ENCODE measurements at regions of chr9 and their contacts with region 1.

Region 1: GRCh38 chr9:34899535-34900158 is 58.4 kb upstream of the PHF24 start:
- DNase-seq: peak; percentile 80 to 94 (median 84)
- H3K4me3 ChIP-seq: peak overlapping the region in 6 of 59 donors; percentile 10 to 39 (median 16)
- H3K27ac ChIP-seq: peak overlapping the region in 33 of 59 donors; percentile 12 to 83 (median 56)
- H3K27me3 ChIP-seq: peaks cover 0 to 4% (median 0%) of the 10 kb centered on the region in 45 donors
- CTCF ChIP-seq: peak; percentile 62 to 95 (median 88)

Region 2: DNA sequence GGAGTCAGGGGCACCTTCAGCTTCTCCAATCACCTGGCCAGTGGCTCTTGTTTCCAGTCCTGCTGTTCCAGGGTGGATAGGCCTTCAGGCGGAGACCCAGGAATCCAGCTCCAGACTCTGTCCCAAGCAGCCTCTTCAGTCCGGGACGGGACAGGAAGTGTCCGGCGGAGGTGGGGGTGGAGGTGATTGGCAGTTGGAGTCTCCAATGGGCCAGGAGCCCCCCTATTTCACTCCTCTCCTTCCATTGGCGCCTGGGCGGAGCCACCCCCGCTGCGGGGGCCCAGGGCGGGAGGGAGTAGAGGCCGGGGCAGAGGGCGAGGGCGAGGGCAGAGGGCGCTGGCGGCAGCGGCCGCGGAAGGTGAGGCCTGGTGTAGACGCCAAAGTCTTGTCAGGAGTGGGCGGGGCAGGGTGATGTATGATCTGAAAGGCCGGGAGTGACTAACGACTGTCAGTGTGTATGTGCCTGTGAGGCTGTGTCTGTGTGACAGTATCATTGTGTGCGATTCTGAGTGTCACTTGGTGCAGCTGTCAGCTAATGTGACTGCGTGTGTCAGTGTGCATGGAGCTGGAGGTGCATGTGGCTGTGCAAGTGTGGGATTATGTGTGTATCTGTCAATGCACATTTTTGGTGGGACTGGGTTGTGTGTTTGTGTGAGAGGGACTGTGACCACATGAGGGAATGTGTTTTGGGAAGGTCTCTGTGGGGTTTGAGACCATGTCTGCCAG is 247.6 kb before region 1 on chr9 and contains the start of gene IL11RA:
- intact Hi-C with region 1: no loop called
- DNase-seq: peak; percentile 28 to 92 (median 84)
- H3K4me3 ChIP-seq: peak within 1 kb of the TSS; percentile 24 to 68 (median 50)
- H3K27ac ChIP-seq: peak within 1 kb of the TSS in 58 of 59 donors; percentile 53 to 92 (median 80)
- H3K27me3 ChIP-seq: no peaks in the 10 kb centered on the region
- CTCF ChIP-seq: peak in 32 of 56 donors; percentile 1 to 55 (median 31)
- total RNA-seq, gene IL11RA: 14.7 to 58.5 (median 30.4) TPM

Region 3: DNA sequence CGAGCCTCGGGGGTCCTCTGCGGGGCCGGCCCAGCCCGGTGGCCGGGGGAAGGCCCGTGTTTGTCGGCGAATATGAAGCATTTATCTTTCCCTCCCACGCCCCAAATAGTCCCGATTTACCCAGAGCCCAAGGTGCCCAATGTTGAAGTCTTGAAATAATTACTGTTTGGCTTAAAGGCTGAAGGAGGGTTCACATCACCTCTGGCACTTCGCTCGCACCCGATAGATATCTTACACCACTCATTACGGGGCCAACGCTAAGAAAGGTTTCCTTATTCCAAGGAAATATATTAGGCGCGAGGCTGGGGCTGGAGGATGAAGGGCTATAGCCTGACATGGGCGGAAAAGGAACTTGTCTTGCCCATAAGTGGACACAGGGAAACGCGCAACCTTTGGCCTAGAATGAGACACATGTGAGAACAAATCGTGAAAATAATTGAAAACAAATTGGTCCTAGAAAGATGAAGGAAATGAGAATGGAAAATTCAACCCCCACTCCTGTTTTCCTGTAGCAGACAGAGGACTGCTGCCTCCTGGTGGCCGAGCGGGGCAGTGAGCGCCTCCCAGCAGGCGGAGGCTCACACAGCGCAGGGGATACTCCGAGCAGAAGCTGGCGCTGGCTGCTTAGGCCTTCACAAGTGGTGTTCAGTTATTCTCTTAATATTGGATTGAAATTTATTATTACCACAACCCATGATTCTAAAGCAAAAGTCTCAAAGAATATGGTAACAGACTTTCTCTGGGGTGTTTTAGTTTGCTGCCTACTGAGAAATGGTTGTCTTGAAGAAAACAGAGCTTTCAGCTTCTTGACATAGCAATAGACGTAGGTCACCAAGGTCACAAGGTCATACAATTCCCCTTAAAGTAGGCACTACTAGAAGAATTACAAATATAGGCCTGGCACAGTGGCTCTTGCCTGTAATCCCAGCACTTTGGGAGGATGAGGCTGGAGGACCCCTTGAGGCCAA is 197.6 kb before region 1 on chr9:
- intact Hi-C with region 1: loop called in 1 of 2 experiments (anchors 5 kb)
- DNase-seq: peak; percentile 80 to 87 (median 84)
- H3K4me3 ChIP-seq: peak overlapping the region; percentile 53 to 92 (median 75)
- H3K27ac ChIP-seq: peak overlapping the region in 57 of 59 donors; percentile 49 to 91 (median 81)
- H3K27me3 ChIP-seq: no peaks in the 10 kb centered on the region
- CTCF ChIP-seq: peak; percentile 90 to 100 (median 98)

Region 4: DNA sequence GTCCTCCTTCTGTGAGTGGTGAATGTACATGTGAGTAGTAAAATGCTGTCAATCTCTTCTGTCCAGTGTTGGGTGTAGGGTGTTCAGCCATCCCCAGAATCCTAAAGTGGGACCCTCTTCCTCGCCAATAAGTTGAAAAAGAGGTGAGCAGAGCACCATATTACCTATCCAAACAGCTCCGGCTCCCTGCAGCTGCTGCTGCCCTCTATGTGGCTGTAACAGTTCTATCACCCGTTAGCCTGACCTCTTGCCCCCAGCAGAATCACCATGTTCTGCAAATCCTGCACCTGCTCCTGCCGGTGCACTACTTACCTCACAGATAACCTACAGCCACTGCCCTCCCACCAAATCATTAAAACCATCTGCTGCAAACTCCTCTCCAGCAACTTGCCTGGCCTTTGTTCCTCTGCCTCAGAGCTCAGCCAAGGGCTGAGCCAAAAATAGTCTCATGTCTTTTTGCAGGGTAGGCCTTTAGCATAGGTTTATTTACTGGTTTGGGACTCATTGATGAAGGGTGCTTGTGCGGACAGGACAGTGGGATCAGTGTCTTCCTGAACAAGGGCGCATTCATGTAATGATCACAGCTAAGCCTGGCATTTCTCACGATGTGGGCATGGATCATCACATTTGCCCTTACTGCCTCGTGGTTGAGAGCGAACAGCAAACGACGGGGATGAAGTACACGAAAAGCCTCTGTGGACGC is 140.1 kb before region 1 on chr9:
- intact Hi-C with region 1: loop called in 1 of 2 experiments (anchors 10 kb)
- DNase-seq: peak in 6 of 10 donors; percentile 30 to 65 (median 44)
- H3K4me3 ChIP-seq: peak overlapping the region in 2 of 59 donors; percentile 10 to 32
- H3K27ac ChIP-seq: peak overlapping the region in 24 of 59 donors; percentile 6 to 77 (median 47)
- H3K27me3 ChIP-seq: peaks cover 0 to 3% (median 0%) of the 10 kb centered on the region in 45 donors
- CTCF ChIP-seq: peak in 4 of 56 donors; percentile 7 to 12 (median 10)

Region 5: GRCh38 chr9:34948451-34948850 is 48.8 kb after region 1 on chr9:
- intact Hi-C with region 1: no loop called
- DNase-seq: no peak
- H3K4me3 ChIP-seq: no peak overlapping the region
- H3K27ac ChIP-seq: no peak overlapping the region
- H3K27me3 ChIP-seq: no peaks in the 10 kb centered on the region
- CTCF ChIP-seq: no peak

Region 6: DNA sequence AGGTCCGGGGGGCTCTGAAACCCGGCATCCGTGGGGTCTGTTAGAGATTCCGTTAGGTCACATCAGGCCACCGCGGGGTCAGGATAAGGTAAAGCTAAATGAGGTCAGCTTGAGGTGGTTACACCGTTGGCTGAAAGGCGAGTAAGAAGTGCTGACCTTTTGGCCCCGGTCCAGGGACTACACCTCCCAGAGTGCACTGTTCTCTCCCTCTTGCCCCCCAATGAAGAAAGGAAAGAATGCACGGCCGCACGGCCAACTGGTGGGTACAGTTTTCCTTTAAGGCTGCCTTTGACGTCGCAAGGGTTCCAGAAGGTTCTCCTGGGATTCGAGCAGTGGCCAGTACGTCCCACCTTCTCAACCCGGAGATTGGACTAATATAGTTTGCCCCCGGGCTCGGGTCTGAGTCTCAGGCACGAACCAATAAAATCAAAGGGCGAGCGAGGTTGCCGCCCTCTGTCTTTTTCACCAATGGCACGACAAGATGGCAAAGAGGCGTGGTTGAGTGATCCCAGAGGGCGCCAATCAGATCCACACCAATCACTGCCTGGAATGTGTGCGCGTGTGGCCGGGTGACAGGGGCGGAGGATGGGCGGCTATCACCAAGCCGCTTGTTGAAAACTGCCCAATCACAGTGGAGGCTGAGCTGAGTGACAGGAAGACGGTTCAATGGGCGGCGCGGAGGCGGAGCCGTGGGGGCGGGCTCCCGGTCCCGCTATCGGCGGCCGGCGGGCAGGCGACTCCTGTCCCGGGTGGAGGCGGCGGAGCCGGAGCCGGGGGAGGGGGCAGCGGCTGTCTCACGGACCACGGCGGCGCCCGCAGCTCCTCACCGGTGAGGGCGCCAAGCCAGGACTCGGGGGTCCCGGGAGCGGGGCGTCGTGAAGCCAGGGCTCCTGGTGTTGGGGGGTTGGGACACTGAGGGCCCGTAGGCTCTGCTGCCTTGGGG is 89.6 kb after region 1 on chr9 and contains the start of gene DNAJB5:
- intact Hi-C with region 1: loop called (anchors 2 kb)
- DNase-seq: peak; percentile 99 to 100 (median 100)
- H3K4me3 ChIP-seq: peak within 1 kb of the TSS; percentile 64 to 98 (median 85)
- H3K27ac ChIP-seq: peak within 1 kb of the TSS; percentile 80 to 99 (median 93)
- H3K27me3 ChIP-seq: no peaks in the 10 kb centered on the region
- CTCF ChIP-seq: peak in 20 of 56 donors; percentile 5 to 62 (median 26)
- total RNA-seq, gene DNAJB5: 7.7 to 33.7 (median 13.4) TPM

Region 7: GRCh38 chr9:35010351-35010958 is 110.8 kb after region 1 on chr9:
- intact Hi-C with region 1: no loop called
- DNase-seq: no peak
- H3K4me3 ChIP-seq: no peak overlapping the region
- H3K27ac ChIP-seq: no peak overlapping the region
- H3K27me3 ChIP-seq: no peaks in the 10 kb centered on the region
- CTCF ChIP-seq: no peak

Region 8: DNA sequence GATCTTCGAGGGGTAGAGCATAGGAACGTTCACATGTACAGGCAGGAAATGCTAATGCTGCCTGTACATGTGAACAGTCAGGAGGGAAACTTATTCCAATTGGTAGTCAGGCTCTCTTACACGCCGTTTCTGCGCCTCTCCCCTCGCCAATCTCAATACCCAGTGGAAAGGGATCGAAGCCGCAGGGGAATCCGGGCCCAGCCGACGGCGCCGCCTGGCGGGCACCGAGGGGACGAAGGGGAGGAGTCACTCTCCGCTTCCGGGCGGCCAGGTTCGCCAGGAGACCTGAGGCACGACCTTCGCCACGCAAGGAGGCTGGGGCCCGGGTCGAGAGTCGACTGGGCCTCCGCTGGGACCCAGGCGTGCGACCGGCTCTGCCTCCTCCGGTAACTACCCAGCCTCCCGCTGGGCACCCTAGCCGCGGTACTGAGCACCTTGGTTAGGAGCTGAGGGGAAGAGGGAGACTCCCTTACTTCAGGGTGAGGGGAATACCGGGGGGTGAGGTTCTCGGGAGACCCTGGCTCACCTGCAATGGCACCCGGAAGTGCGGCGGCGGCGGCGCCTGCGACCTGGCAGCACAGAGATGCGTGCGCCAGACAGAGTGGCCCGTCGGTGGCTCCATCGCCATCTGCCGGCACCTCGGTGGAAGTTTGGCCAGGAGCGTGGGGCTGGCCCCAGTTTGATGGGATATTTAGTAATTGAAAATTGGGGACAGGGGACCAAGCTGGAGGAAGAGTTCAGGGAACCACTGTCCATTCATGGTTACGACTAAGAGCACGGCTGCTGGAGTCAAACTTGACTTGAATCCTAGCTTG is 196.6 kb after region 1 on chr9 and contains the start of gene PIGO:
- intact Hi-C with region 1: loop called in 1 of 2 experiments (anchors 5 kb)
- DNase-seq: peak; percentile 77 to 91 (median 90)
- H3K4me3 ChIP-seq: peak within 1 kb of the TSS; percentile 72 to 100 (median 93)
- H3K27ac ChIP-seq: peak within 1 kb of the TSS; percentile 85 to 99 (median 96)
- H3K27me3 ChIP-seq: no peaks in the 10 kb centered on the region
- CTCF ChIP-seq: peak; percentile 52 to 92 (median 76)
- total RNA-seq, gene PIGO: 14.1 to 39.9 (median 22.4) TPM

Region 9: DNA sequence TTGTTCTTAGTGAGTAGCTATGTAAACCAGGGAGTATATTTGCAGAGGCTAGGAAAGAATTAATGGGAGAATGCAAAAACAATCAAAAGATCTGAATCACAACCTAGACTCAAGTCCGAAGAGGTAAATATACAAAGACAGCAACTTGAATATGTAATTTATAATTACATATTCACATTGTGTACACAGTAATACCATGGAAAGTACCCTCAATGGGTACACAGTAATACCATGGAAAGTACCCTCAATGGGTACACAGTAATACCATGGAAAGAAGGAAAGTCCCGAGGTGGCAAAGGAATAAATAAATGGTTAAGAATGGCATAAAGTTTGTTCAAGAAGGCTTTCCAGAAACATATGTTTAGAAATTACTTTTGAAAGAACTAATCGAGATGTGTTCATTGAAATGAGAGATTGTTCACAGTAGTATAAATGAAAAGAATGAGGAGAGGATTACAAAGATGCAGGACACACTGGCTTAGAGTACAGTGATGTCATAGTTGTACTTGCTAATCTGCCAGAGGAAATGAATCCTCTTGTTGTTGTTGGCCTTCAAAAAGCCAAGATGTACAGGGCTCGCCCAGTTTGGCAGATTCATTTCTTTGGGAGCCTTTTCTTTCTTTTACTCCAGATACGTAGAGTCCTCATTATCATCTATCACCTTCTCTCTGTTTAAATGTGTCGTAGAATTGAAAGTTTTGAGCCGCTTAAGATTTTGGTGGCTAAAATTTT is 378.1 kb after region 1 on chr9:
- intact Hi-C with region 1: loop called in 1 of 2 experiments (anchors 5 kb)
- DNase-seq: no peak
- H3K4me3 ChIP-seq: peak overlapping the region in 32 of 59 donors; percentile 1 to 58 (median 27)
- H3K27ac ChIP-seq: peak overlapping the region in 50 of 59 donors; percentile 1 to 79 (median 47)
- H3K27me3 ChIP-seq: no peaks in the 10 kb centered on the region
- CTCF ChIP-seq: peak in 2 of 56 donors; percentile 10 to 11

Region 10: DNA sequence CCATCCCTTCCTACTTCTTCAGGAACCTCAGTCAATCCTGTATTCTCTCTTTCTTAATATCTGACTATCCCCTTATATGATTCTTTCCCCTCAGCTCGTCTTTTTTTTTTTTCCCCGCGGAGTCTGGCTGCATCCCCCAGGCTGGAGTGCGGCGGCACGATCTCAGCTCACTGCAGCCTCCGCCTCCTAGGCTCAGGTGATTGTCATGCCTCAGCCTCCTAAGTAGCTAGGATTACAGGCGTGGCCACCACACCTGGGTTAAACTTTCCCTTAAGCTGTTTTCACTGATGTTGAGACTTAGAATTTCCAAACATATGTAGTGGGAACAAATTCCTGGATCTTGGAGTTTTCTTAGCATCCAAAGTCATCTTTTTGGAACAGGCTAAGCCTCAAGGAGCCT is 576.9 kb after region 1 on chr9:
- intact Hi-C with region 1: loop called in 1 of 2 experiments (anchors 5 kb)
- DNase-seq: no peak
- H3K4me3 ChIP-seq: no peak overlapping the region
- H3K27ac ChIP-seq: no peak overlapping the region
- H3K27me3 ChIP-seq: no peaks in the 10 kb centered on the region
- CTCF ChIP-seq: no peak

Measured in dorsolateral prefrontal cortex (tissue), 120 donors.